Aorta (tissue), 5 donors: ENCODE measurements at regions of chrX and their contacts with region 1.

Region 1: DNA sequence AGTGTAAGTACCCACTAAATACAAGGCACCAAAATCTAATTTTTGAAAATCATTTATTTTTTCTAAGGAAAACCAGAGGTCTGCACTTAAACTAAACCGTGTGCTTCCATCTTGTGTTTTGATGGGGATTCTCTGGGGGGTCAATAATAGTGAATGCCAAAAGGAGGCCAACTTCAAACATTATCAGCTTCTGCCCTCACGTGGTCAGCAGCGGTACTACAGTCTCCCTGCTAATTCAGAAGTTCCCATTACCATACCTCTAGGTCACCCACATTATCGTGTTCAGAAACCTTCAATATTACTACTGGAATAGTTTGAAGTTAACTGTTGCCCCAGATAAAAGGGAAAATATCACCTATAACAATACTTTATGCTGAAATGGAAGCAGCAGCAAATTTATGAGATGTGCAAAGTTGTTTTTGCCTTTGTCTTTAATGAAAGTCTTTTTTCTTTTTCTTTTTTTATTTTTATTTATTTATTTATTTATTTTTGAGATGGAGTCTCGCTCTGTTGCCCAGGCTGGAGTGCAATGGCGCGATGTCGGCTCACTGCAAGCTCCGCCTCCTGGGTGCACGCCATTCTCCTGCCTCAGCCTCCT is 17.3 kb downstream of the CTPS2 start:
- DNase-seq: peak; percentile 61 to 84
- ATAC-seq: peak; percentile 76
- H3K4me3 ChIP-seq: no peak overlapping the region
- H3K27ac ChIP-seq: no peak overlapping the region
- H3K4me1 ChIP-seq: no peaks in the 10 kb centered on the region
- H3K27me3 ChIP-seq: no peaks in the 10 kb centered on the region

Region 2: GRCh38 chrX:16119353-16120220 is 575.6 kb before region 1 on chrX:
- intact Hi-C with region 1: loop called in 1 of 2 experiments (anchors 10 kb)
- DNase-seq: no peak
- ATAC-seq: no peak
- H3K4me3 ChIP-seq: no peak overlapping the region
- H3K27ac ChIP-seq: no peak overlapping the region
- H3K4me1 ChIP-seq: no peaks in the 10 kb centered on the region
- H3K27me3 ChIP-seq: no peaks in the 10 kb centered on the region